GM18951 (cell line): ENCODE measurements at regions of chr12 and their contacts with region 1.

Region 1: GRCh38 chr12:117587631-117588287 is 226.3 kb upstream of the NOS1 start:
- POLR2A ChIP-seq: no peak

Region 2: DNA sequence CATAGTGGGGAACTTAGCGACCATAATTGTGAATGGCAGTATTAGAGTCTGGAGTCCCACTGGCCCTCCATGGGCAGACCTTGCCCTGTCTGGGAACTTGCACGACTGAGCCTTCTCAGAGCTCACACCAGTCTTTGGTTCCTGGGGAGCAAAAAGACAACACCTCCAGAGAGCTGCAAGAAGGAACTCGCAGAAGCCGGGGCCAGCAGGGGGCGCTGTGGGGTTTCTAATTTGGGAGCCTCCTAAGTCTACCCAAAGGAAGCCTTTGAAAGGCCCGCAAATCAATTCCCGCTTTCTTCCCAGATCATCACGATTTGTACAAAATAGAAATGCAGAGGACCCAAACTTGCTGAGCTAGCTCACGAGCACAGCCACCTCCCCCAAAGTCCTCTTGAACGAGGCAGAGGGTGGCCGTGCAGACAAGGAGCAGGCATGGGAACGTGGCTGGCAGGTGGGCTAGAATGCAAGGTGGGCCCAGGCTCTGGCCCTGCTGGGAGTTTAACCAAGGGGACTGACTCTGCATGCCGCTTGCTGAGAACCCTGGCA is 351.2 kb before region 1 on chr12:
- in situ Hi-C with region 1: loop called (anchors 25 kb)
- POLR2A ChIP-seq: no peak